ENCODE measurements at regions of chr2 and their contacts with region 1.

Region 1: GRCh38 chr2:177400337-177400923 is 7.9 kb downstream of the AGPS start:
- DNase-seq: no peak
- ATAC-seq: peak; percentile 37

Region 2: DNA sequence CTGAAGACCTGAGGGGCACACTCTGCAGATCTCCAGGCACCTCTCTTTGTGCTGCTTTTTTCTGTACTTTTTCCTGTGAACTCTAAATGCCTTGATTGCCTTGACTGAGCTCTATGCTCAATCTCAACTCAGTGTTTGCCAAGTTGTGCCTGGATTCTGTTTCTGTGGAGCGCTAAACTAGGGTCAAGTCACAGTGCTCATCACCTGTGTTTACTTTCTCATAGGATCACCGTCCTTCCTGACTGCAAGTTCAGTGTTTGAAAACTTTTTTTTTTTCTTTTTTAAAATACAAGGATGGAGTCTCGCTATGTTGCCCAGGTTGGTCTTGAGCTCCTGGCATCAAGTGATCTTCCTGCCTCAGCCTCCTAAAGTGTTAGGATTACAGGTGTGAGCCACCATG is 54.8 kb after region 1 on chr2:
- intact Hi-C with region 1: loop called (anchors 10 kb)
- DNase-seq: no peak
- ATAC-seq: no peak

Region 3: DNA sequence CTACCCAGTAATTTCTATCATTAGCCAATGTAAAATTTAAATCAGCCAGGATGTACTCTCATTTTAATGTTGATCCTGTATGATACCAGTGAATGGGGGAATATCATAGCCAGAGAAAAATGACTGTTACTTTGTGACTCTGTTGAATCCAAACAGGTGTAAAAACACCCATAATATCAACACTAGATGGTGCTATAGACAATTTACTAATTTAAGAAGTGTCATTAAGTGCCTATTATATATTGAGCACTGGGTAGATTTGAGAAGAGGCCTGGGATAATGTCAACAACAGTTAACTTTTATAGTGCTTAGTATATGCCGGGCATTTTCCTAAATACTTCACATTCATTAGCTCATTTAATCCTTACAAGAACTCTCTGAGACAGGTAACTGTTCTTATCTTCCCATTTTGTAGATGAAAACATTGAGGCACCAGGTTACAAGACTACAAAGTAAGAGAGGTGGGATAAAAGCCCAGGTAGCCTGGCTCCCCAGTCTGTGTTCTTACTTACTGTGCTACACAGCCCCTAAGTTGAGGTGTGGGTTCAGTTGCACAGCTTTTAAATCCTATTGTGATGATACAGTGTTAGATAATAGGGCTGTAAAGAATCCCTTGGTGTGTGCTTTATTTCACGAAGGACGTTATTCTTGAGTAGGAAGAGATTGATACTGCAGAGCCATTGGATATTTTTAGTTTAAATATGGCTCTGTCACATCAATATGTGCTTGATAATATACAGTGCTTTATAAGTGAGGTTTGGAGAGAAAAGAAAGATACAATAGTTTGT is 317.6 kb after region 1 on chr2:
- intact Hi-C with region 1: no loop called
- DNase-seq: no peak
- ATAC-seq: no peak